Natural killer cell (primary cell): ENCODE measurements at regions of chr4 and their contacts with region 1.

Region 1: GRCh38 chr4:8409264-8410065 is 31.1 kb downstream of the ACOX3 start:
- DNase-seq: peak; percentile 86 to 90
- ATAC-seq: peak; percentile 82 to 94 (median 84)
- H3K4me3 ChIP-seq: no peak overlapping the region
- H3K4me3 Mint-ChIP-seq: peak overlapping the region; percentile 38
- H3K27ac ChIP-seq: peak overlapping the region; percentile 61
- H3K27ac Mint-ChIP-seq: peak overlapping the region; percentile 85 to 87
- H3K4me1 ChIP-seq: peaks cover 28% of the 10 kb centered on the region
- H3K4me1 Mint-ChIP-seq: peaks cover 22 to 44% of the 10 kb centered on the region in 2 donors
- H3K27me3 ChIP-seq: no peaks in the 10 kb centered on the region
- H3K27me3 Mint-ChIP-seq: no peaks in the 10 kb centered on the region
- CTCF ChIP-seq: no peak

Region 2: GRCh38 chr4:8158710-8159536 is 250.5 kb before region 1 on chr4 and contains the start of gene ABLIM2:
- intact Hi-C with region 1: loop called (anchors 1 kb)
- DNase-seq: peak; percentile 99
- ATAC-seq: peak; percentile 99 to 100 (median 99)
- H3K4me3 ChIP-seq: peak within 1 kb of the TSS; percentile 64
- H3K4me3 Mint-ChIP-seq: peak within 1 kb of the TSS; percentile 99
- H3K27ac ChIP-seq: no peak within 1 kb of the TSS
- H3K27ac Mint-ChIP-seq: peak within 1 kb of the TSS; percentile 83 to 94
- H3K4me1 ChIP-seq: peaks cover 24% of the 10 kb centered on the region
- H3K4me1 Mint-ChIP-seq: peaks cover 15 to 19% of the 10 kb centered on the region in 2 donors
- H3K27me3 ChIP-seq: peaks cover 12% of the 10 kb centered on the region
- H3K27me3 Mint-ChIP-seq: peaks cover 0 to 14% of the 10 kb centered on the region in 2 donors
- CTCF ChIP-seq: no peak
- total RNA-seq, gene ABLIM2: 0.71 to 2.8 (median 1.3) TPM

Region 3: GRCh38 chr4:8428293-8429097 is 19.0 kb after region 1 on chr4:
- intact Hi-C with region 1: loop called (anchors 1 kb)
- DNase-seq: peak; percentile 94 to 98
- ATAC-seq: peak; percentile 95 to 98 (median 96)
- H3K4me3 ChIP-seq: peak overlapping the region; percentile 71
- H3K4me3 Mint-ChIP-seq: peak overlapping the region; percentile 95
- H3K27ac ChIP-seq: peak overlapping the region; percentile 32
- H3K27ac Mint-ChIP-seq: peak overlapping the region; percentile 94 to 96
- H3K4me1 ChIP-seq: peaks cover 16% of the 10 kb centered on the region
- H3K4me1 Mint-ChIP-seq: peaks cover 29 to 32% of the 10 kb centered on the region in 2 donors
- H3K27me3 ChIP-seq: no peaks in the 10 kb centered on the region
- H3K27me3 Mint-ChIP-seq: no peaks in the 10 kb centered on the region
- CTCF ChIP-seq: no peak

Region 4: DNA sequence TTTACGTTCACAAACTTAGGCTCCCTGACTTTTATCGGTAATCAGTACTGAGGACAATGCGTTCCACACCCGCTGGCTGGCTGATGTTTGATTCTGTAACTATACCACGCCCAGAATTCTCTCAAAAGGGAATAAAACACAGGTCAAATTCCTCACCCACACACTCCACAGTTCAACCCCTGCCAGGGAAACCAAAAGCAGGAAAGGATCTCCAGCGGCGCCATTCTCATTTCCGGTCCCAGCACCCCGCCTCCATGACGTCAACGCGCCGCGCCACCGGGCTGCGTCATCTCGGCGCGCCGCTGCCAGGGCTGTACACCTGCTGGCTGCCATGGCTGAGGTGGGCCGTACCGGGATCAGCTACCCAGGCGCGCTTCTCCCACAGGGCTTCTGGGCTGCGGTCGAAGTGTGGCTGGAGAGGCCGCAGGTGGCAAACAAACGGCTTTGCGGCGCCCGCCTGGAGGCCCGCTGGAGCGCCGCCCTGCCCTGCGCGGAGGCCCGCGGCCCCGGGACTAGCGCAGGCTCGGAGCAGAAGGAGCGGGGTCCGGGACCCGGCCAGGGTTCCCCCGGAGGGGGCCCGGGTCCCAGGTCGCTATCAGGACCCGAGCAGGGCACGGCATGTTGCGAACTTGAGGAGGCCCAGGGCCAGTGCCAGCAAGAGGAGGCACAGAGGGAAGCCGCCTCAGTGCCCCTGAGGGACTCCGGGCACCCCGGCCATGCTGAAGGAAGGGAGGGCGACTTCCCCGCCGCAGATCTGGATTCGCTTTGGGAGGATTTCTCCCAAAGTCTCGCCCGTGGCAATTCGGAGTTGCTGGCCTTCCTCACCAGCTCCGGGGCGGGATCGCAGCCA is 31.3 kb after region 1 on chr4 and contains the starts of genes ACOX3 and TRMT44:
- intact Hi-C with region 1: loop called (anchors 1 kb)
- DNase-seq: peak; percentile 96 to 100
- ATAC-seq: peak; percentile 93 to 94 (median 93)
- H3K4me3 ChIP-seq: peak within 1 kb of the TSS; percentile 90
- H3K4me3 Mint-ChIP-seq: peak within 1 kb of the TSS; percentile 99
- H3K27ac ChIP-seq: peak within 1 kb of the TSS; percentile 98
- H3K27ac Mint-ChIP-seq: peak within 1 kb of the TSS; percentile 99
- H3K4me1 ChIP-seq: peaks cover 36% of the 10 kb centered on the region
- H3K4me1 Mint-ChIP-seq: peaks cover 68 to 78% of the 10 kb centered on the region in 2 donors
- H3K27me3 ChIP-seq: no peaks in the 10 kb centered on the region
- H3K27me3 Mint-ChIP-seq: no peaks in the 10 kb centered on the region
- CTCF ChIP-seq: no peak
- total RNA-seq, gene ACOX3: 12.4 to 18.3 (median 15.4) TPM
- total RNA-seq, gene TRMT44: 24.4 to 37.5 (median 34.3) TPM

Region 5: DNA sequence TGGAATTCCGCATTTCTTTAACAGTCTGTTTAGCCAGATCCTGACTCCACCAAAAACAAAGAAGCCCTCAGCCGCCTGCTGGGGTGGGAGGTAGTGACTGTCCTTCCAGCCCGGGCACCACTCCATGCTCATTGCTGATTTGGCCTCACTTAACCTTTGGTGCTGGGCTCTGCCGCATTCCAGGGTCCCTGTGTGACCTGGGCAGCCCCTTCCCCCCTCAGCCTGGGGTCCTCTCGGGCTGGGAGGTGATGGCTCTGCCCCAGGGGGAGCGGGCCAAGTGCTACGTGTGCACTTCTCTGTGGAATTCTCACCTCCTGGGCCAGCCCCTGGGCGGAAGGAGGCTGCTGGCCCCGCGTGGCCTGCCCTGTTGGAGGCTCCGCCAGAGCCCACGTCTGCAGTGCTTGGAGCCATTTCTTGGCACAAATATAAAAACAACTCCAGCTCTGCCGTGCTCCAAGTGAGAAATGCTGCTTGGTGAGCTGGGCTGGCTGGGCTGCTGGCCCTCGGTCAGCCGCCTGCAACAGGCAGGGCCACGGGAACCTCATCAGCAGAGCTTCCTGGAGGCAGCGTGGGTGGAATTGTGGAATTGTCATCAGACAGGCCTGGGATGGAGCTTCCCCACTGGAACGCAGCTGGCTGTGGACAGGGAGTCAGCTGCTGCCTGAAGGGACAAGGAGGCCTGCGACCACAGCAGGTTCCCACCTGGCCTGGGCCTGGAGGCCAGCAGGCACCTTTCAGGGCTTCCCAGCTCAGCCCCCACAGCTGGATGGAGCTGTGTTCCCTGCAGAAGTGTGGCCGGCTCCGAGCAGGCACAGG is 97.1 kb after region 1 on chr4:
- intact Hi-C with region 1: no loop called
- DNase-seq: no peak
- ATAC-seq: no peak
- H3K4me3 ChIP-seq: no peak overlapping the region
- H3K4me3 Mint-ChIP-seq: no peak overlapping the region
- H3K27ac ChIP-seq: no peak overlapping the region
- H3K27ac Mint-ChIP-seq: no peak overlapping the region
- H3K4me1 ChIP-seq: no peaks in the 10 kb centered on the region
- H3K4me1 Mint-ChIP-seq: no peaks in the 10 kb centered on the region
- H3K27me3 ChIP-seq: no peaks in the 10 kb centered on the region
- H3K27me3 Mint-ChIP-seq: no peaks in the 10 kb centered on the region
- CTCF ChIP-seq: no peak